Activated CD4-positive, alpha-beta memory T cell treated with anti-CD3 and anti-CD28 coated beads, Interleukin-2, amount 10 ng/mL, durations not matched to agents 7 days and 5 days (primary cell): ENCODE measurements at regions of chr17 and their contacts with region 1.

Region 1: DNA sequence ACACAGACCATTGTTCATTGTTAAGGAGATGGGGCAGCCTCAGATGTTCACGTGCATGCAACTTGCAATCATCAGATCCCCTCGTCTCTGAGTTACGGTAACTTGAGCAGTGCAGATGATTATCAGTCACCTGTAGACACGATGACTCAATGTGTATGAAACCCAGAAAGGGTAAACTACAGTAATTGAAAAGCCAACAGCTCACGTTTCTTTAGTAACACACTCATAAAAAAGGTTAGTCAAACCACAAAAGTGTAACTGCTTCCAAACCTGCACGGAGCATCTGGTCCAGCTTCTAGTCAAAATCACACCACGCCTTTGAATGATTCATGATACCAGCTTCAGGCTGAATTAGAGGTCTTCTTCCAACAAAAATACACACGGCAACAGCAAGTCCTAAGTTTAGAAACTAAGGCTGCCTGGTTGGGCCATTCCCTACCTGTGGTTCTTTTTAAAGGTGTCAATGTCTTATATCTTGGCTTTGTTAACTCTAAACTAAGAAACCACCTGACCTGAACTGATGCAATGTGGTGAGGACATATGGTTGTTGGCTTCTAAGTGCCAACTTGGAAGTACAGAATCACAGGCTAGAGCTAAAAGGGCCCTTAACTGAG is 32.3 kb downstream of the GRB7 start:
- DNase-seq: peak; percentile 70
- H3K4me3 Mint-ChIP-seq: peak overlapping the region; percentile 9
- H3K27ac Mint-ChIP-seq: peak overlapping the region; percentile 87
- H3K4me1 Mint-ChIP-seq: peaks cover 90% of the 10 kb centered on the region
- H3K27me3 Mint-ChIP-seq: no peaks in the 10 kb centered on the region

Region 2: GRCh38 chr17:39754161-39754951 is 15.7 kb before region 1 on chr17:
- CTCF ChIA-PET with region 1: interaction called, 3 read pairs
- POLR2A ChIA-PET with region 1: interaction called, 57 read pairs
- DNase-seq: peak; percentile 99
- H3K4me3 Mint-ChIP-seq: peak overlapping the region; percentile 77
- H3K27ac Mint-ChIP-seq: peak overlapping the region; percentile 67
- H3K4me1 Mint-ChIP-seq: peaks cover 59% of the 10 kb centered on the region
- H3K27me3 Mint-ChIP-seq: no peaks in the 10 kb centered on the region

Region 3: DNA sequence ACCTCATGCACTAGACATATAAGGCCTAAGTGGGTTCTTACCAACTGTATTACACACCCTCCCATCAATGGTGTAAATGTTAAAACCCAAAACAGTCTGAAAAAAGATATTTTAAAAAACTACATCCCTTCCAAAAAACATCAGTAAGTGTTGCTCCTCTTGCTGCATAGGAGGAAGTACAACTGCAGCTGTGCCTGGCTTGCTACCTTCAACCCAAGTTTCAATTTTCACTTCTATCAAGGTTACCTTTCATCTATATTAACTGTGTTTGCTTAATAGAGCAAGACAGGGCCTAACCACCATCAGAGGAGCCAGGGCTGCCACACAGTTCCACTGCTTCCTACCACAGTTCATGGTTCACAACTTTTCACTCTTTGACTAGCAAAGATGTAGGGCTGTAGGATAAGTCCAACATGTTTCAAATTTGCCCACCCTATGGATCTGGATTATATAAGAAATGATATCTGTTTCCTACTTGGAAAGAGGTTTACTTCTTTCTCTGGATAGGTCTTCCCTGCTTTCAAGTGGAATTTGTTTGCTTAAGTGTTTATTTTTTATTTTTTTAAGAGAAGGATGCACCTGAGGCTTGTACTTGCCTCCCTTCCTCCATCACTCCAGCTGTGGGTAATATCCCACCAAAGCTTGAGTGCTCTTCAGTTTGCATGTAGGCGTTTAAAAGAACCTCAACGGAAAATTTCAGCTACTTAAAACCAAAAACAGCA is 24.3 kb after region 1 on chr17:
- CTCF ChIA-PET with region 1: interaction called, 17 read pairs
- POLR2A ChIA-PET with region 1: interaction called, 141 read pairs
- DNase-seq: no peak
- H3K4me3 Mint-ChIP-seq: no peak overlapping the region
- H3K27ac Mint-ChIP-seq: peak overlapping the region; percentile 88
- H3K4me1 Mint-ChIP-seq: peaks cover 63% of the 10 kb centered on the region
- H3K27me3 Mint-ChIP-seq: no peaks in the 10 kb centered on the region

Region 4: GRCh38 chr17:39813631-39814030 is 43.5 kb after region 1 on chr17:
- CTCF ChIA-PET with region 1: interaction called, 6 read pairs
- POLR2A ChIA-PET with region 1: interaction called, 21 read pairs
- DNase-seq: peak; percentile 62
- H3K4me3 Mint-ChIP-seq: peak overlapping the region; percentile 59
- H3K27ac Mint-ChIP-seq: peak overlapping the region; percentile 67
- H3K4me1 Mint-ChIP-seq: peaks cover 69% of the 10 kb centered on the region
- H3K27me3 Mint-ChIP-seq: no peaks in the 10 kb centered on the region

Region 5: GRCh38 chr17:39822051-39822451 is 52.0 kb after region 1 on chr17:
- CTCF ChIA-PET with region 1: interaction called, 6 read pairs
- POLR2A ChIA-PET with region 1: interaction called, 21 read pairs
- DNase-seq: no peak
- H3K4me3 Mint-ChIP-seq: no peak overlapping the region
- H3K27ac Mint-ChIP-seq: no peak overlapping the region
- H3K4me1 Mint-ChIP-seq: peaks cover 52% of the 10 kb centered on the region
- H3K27me3 Mint-ChIP-seq: no peaks in the 10 kb centered on the region

Region 6: DNA sequence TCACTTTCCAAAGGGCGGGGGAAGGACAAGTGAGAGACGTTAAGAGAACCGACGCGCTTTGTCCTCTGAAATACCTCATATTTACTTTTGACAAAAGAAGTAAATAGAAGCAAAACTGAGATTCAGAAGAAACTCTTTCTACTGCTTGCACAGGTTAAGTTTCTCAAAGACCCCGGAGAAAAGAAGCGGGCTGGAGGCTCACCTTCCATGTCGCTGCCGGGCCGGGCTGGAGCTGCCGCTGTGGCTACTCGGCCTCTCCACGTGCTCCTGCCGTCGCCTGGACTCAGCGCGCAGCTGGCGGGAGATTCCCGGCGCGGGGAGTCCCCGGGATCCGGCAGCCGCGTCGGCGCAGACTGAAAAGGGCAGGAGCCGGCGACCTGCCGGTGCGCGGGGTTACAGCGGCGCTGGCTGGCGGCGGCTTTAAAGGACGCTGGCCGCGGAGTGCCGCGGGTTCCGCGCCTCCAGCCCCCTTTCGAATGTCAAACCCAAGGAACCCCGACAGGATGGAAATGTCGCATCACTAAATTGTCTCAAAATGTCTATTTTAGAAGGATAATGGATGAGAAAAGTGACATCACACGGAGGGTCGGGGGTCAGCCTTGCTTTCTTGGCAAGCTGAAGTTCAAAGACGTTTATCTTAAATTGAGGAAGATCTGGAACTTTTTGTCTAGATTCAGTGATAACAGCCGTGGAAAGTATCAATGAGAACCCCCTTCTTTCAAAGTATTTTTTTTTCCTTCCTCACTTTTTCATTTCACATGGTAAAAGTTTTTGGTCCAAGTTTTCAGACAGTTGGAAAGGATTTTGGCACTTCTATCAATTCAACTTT is 94.1 kb after region 1 on chr17 and contains the start of gene IKZF3:
- CTCF ChIA-PET with region 1: interaction called, 4 read pairs
- POLR2A ChIA-PET with region 1: interaction called, 43 read pairs
- DNase-seq: peak; percentile 80
- H3K4me3 Mint-ChIP-seq: peak within 1 kb of the TSS; percentile 84
- H3K27ac Mint-ChIP-seq: peak within 1 kb of the TSS; percentile 80
- H3K4me1 Mint-ChIP-seq: peaks cover 64% of the 10 kb centered on the region
- H3K27me3 Mint-ChIP-seq: no peaks in the 10 kb centered on the region
- total RNA-seq, gene IKZF3: 37.9 to 38.2 TPM

Region 7: GRCh38 chr17:39927101-39927928 is 157.2 kb after region 1 on chr17 and contains the starts of genes LRRC3C and ORMDL3:
- CTCF ChIA-PET with region 1: no interaction called
- POLR2A ChIA-PET with region 1: interaction called, 10 read pairs
- DNase-seq: peak; percentile 93
- H3K4me3 Mint-ChIP-seq: peak within 1 kb of the TSS; percentile 83
- H3K27ac Mint-ChIP-seq: peak within 1 kb of the TSS; percentile 95
- H3K4me1 Mint-ChIP-seq: peaks cover 62% of the 10 kb centered on the region
- H3K27me3 Mint-ChIP-seq: no peaks in the 10 kb centered on the region
- total RNA-seq, gene LRRC3C: not detected
- total RNA-seq, gene ORMDL3: 104 to 111 TPM